ENCODE measurements at regions of chr3 and their contacts with region 1.

Region 1: GRCh38 chr3:50338965-50339364 is 1.7 kb downstream of the RASSF1 start:
- DNase-seq: no peak
- H3K4me3 ChIP-seq: no peak overlapping the region
- H3K27ac ChIP-seq: no peak overlapping the region
- H3K4me1 ChIP-seq: no peaks in the 10 kb centered on the region
- H3K27me3 ChIP-seq: no peaks in the 10 kb centered on the region
- CTCF ChIP-seq: no peak

Region 2: GRCh38 chr3:50327943-50328691 is 10.8 kb before region 1 on chr3 and contains the start of gene TUSC2:
- CTCF ChIA-PET with region 1: interaction called, 4 read pairs
- POLR2A ChIA-PET with region 1: interaction called, 27 read pairs
- intact Hi-C with region 1: no loop called
- DNase-seq: peak; percentile 95
- H3K4me3 ChIP-seq: peak within 1 kb of the TSS; percentile 76
- H3K27ac ChIP-seq: peak within 1 kb of the TSS; percentile 76
- H3K4me1 ChIP-seq: no peaks in the 10 kb centered on the region
- H3K27me3 ChIP-seq: no peaks in the 10 kb centered on the region
- CTCF ChIP-seq: no peak
- total RNA-seq, gene TUSC2: 14.6 and 15.2 TPM in 2 replicates